PC-9 (cell line): ENCODE measurements at regions of chr10 and their contacts with region 1.

Region 1: GRCh38 chr10:73886085-73886529 is 11.8 kb upstream of the CAMK2G start:
- DNase-seq: peak; percentile 59 to 76
- H3K4me3 ChIP-seq: no peak overlapping the region
- H3K27ac ChIP-seq: peak overlapping the region; percentile 97
- H3K4me1 ChIP-seq: peaks cover 58% of the 10 kb centered on the region
- H3K27me3 ChIP-seq: no peaks in the 10 kb centered on the region
- CTCF ChIP-seq: peak; percentile 96

Region 2: GRCh38 chr10:73717556-73717955 is 168.6 kb before region 1 on chr10:
- CTCF ChIA-PET with region 1: no interaction called
- POLR2A ChIA-PET with region 1: no interaction called
- intact Hi-C with region 1: no loop called
- DNase-seq: no peak
- H3K4me3 ChIP-seq: no peak overlapping the region
- H3K27ac ChIP-seq: no peak overlapping the region
- H3K4me1 ChIP-seq: no peaks in the 10 kb centered on the region
- H3K27me3 ChIP-seq: no peaks in the 10 kb centered on the region
- CTCF ChIP-seq: no peak

Region 3: GRCh38 chr10:73871915-73872710 is 14.0 kb before region 1 on chr10:
- CTCF ChIA-PET with region 1: no interaction called
- POLR2A ChIA-PET with region 1: interaction called, 8 read pairs
- intact Hi-C with region 1: loop called (anchors 1 kb)
- DNase-seq: peak; percentile 94 to 100
- H3K4me3 ChIP-seq: peak overlapping the region; percentile 64
- H3K27ac ChIP-seq: peak overlapping the region; percentile 88
- H3K4me1 ChIP-seq: peaks cover 75% of the 10 kb centered on the region
- H3K27me3 ChIP-seq: no peaks in the 10 kb centered on the region
- CTCF ChIP-seq: peak; percentile 58; the same call in 1 of the 2 replicates

Region 4: GRCh38 chr10:73931767-73932619 is 45.9 kb after region 1 on chr10:
- CTCF ChIA-PET with region 1: interaction called, 58 read pairs
- POLR2A ChIA-PET with region 1: interaction called, 15 read pairs
- intact Hi-C with region 1: loop called (anchors 1 kb)
- DNase-seq: peak; percentile 93 to 99
- H3K4me3 ChIP-seq: peak overlapping the region; percentile 27; the same call in 1 of the 2 replicates
- H3K27ac ChIP-seq: peak overlapping the region; percentile 97
- H3K4me1 ChIP-seq: peaks cover 43% of the 10 kb centered on the region
- H3K27me3 ChIP-seq: no peaks in the 10 kb centered on the region
- CTCF ChIP-seq: no peak

Region 5: DNA sequence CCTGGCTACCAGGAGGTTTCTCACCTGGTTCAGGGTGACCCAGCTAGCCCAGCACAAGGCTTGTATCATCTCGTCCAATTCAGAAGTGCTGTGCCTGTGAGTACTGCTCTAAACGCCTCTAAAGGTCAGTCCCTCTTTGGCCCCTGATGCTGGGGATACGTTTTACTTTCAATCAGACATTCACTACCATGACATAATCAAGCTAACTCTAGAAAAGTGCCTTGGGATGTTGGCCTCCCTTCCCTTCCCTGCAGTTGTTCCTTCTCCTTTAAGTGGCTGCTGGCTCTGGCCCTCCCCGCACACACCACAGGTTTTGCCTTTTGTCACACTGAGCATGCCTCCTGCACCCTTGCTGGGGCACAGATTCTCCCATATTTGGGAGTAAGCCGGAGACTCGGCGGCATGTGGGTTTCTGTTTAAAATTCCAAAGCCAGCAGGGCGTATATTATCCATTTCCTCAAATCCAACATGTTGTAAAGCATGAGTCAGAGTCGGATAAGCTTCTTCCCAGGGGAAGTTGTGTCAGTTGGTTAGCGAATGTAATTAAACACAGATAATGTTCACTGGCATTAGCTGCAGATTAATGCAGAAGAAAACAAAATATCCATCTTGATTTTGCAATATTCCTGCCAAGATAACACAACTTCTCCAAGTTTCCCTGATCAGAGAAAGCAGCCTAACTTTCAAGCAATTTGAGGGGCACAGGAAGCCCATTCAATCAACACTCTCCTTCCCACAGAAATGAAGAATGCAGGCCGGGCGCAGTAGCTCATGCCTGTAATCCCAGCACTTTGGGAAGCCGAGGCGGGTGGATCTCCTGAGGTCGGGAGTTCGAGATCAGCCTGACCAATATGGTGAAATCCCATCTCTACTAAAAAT is 80.0 kb after region 1 on chr10:
- CTCF ChIA-PET with region 1: interaction called, 4 read pairs
- POLR2A ChIA-PET with region 1: interaction called, 16 read pairs
- intact Hi-C with region 1: loop called (anchors 2 kb)
- DNase-seq: peak; percentile 93 to 99
- H3K4me3 ChIP-seq: peak overlapping the region; percentile 43; the same call in 1 of the 2 replicates
- H3K27ac ChIP-seq: peak overlapping the region; percentile 99
- H3K4me1 ChIP-seq: peaks cover 38% of the 10 kb centered on the region
- H3K27me3 ChIP-seq: no peaks in the 10 kb centered on the region
- CTCF ChIP-seq: no peak

Region 6: GRCh38 chr10:74047868-74048267 is 161.8 kb after region 1 on chr10:
- CTCF ChIA-PET with region 1: interaction called, 3 read pairs
- POLR2A ChIA-PET with region 1: interaction called, 10 read pairs
- intact Hi-C with region 1: no loop called
- DNase-seq: peak; percentile 61 to 89
- H3K4me3 ChIP-seq: peak overlapping the region; percentile 29; the same call in 1 of the 2 replicates
- H3K27ac ChIP-seq: peak overlapping the region; percentile 90
- H3K4me1 ChIP-seq: peaks cover 62% of the 10 kb centered on the region
- H3K27me3 ChIP-seq: no peaks in the 10 kb centered on the region
- CTCF ChIP-seq: no peak

Region 7: DNA sequence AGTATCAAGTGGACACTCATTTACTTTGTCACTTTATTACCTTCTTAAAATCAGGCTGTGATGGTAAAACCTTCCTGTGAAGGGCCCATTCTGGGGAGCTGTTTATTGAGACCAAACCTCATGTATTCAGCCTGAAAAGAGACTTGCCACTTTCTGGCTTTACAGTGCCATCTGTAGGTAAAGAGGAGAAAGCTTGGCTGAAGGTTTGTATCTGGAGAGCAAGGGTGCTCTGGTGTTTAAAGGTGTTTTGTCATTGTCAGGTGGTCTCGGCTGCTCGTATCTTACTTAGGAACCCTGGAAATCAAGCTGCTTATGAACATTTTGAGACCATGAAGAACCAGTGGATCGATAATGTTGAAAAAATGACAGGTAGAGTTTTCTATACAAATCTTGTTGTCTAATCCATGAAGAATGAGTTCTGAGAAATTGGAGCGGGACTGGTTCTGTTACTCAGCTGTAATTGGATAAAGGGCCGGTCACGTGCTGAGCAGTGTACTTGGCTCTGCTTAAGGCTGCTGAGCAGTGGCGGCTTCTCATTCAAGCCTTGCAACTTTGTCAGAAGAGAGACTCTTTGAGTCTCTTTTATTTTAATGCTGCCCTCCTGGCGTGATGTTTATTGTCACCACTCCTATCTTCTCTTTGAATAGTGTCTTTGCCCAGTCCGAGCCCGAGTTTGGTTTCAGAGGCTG is 217.6 kb after region 1 on chr10:
- CTCF ChIA-PET with region 1: interaction called, 4 read pairs
- POLR2A ChIA-PET with region 1: interaction called, 3 read pairs
- intact Hi-C with region 1: loop called (anchors 2 kb)
- DNase-seq: no peak
- H3K4me3 ChIP-seq: no peak overlapping the region
- H3K27ac ChIP-seq: no peak overlapping the region
- H3K4me1 ChIP-seq: no peaks in the 10 kb centered on the region
- H3K27me3 ChIP-seq: no peaks in the 10 kb centered on the region
- CTCF ChIP-seq: peak; percentile 74

Region 8: DNA sequence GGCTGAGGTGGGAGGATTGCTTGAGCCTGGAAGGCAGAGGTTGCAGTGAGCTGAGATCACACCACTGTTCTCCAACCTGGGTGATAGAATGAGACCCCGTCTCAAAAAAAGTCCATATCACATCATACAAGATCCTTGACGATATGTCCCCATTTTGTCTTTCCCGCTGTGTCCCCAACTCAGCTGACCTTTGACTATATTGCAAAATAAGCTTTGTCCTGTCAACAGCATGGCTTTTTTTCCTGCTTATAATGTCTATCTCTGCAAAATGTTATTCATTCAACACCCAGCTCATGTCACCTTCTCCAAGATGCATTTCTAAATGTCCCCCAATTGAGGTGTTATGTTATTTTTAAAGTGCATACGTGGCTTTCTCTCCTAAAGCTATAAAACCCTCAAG is 804.3 kb after region 1 on chr10:
- CTCF ChIA-PET with region 1: no interaction called
- POLR2A ChIA-PET with region 1: no interaction called
- intact Hi-C with region 1: no loop called
- DNase-seq: no peak
- H3K4me3 ChIP-seq: no peak overlapping the region
- H3K27ac ChIP-seq: no peak overlapping the region
- H3K4me1 ChIP-seq: no peaks in the 10 kb centered on the region
- H3K27me3 ChIP-seq: no peaks in the 10 kb centered on the region
- CTCF ChIP-seq: no peak